ENCODE measurements at regions of chr9 and their contacts with region 1.

Region 1: DNA sequence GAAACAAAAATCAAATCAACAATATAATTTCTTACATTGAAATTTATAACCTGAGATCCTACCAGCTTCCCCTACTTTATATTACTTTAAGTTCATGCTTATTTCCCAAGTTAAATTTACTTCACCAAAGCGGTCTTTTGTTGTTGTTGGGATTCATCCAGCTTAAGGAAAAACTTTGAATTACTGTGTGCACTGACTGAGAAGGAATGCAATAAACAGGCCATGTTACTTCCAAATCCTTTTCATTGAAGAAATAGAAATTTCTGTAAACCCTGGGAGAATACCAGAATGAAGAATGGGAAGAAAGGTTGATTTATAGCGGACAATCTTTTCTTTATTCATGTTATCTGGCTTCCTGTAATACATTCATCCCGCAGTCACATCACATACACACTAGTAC is 8.8 kb downstream of the PCA3 start:
- DNase-seq: no peak

Region 2: DNA sequence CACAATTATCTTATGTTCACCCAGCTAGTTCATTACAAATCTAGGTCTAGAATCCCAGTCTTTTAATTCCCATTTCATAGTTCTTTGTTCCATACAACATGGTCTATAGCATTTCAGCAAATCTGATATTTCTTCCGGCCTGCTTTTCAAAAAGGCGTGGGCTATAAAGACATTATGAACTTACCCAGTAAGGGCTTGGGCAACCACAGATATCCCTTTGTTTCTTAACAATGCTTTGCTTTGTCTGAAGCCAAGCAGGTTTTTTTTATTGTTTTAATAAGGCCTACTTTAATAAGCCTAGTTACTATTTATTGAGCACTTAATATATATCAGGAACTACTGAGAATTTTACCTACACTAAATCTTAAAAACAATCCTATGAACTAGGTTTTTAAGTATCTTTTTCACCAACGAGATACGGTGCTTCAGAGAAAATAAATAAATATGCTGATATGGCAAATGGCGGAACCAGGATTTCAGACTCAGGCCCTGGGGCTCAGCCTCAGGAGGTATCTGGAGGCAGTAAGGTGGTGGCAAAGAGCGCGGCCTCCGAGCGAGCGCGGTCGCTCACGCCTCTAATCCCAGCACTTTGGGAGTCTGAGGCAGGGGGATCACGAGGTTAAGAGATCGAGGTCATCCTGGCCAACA is 20.9 kb after region 1 on chr9:
- intact Hi-C with region 1: loop called in 1 of 2 experiments (anchors 1 kb)
- DNase-seq: peak; percentile 41

Region 3: GRCh38 chr9:76882686-76883085 is 109.7 kb after region 1 on chr9:
- intact Hi-C with region 1: no loop called
- DNase-seq: no peak

Measured in posterior vena cava (tissue), 2 donors.